Endothelial cell of umbilical vein (primary cell): ENCODE measurements at regions of chr20 and their contacts with region 1.

Region 1: DNA sequence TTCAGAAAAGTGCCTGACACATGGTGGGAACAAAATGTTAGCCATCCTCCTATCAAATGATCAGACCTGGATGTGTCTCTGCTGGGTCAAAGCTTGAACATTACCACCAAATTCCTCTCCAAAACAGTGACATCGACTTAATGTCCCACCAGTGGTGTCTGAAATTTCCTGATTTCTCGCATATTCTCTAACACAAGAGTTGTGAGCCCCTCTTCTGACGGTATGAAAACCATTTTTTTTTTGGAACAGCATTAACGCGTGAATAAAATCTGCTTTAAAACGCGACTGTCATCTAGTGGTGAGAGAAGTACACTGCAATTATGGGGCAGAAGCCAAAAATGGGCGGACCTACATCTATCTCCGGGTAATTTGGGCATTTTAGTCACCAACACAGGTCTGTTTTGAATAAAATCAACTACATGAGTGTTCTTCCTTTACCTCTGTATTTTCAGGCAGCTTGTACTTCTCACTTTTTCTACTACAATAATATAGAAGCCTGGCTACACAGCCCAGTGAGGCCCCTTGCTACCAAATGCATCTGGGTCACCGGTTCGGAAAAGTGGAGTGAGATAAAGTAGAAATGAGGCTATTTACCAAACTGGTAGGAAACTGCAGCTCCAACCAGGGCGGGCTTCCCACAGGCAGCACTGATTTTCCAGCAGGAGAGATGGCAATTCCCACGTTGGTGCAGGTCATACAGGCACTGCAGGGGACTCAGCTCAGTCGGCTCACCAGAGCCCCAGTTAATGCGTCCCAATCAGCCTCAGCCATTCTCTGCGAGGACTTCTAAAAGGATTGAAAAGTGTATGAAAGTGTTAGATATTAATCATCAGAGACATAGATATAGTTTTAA is 27.4 kb downstream of the MGME1 start:
- DNase-seq: peak; percentile 70
- H3K4me3 ChIP-seq: no peak overlapping the region
- H3K27ac ChIP-seq: no peak overlapping the region
- H3K4me1 ChIP-seq: peaks cover 16% of the 10 kb centered on the region
- H3K27me3 ChIP-seq: peaks cover 0 to 4% of the 10 kb centered on the region in 2 experiments
- CTCF ChIP-seq: peak; percentile 85 to 86
- POLR2A ChIP-seq: no peak

Region 2: GRCh38 chr20:17504898-17505635 is 491.1 kb before region 1 on chr20:
- CTCF ChIA-PET with region 1: interaction called, 20 read pairs
- POLR2A ChIA-PET with region 1: no interaction called
- dilution Hi-C with region 1: no loop called
- intact Hi-C with region 1: loop called (anchors 1 kb)
- DNase-seq: peak; percentile 72
- H3K4me3 ChIP-seq: peak overlapping the region; percentile 31 to 74 (median 58)
- H3K27ac ChIP-seq: peak overlapping the region; percentile 9
- H3K4me1 ChIP-seq: peaks cover 13% of the 10 kb centered on the region
- H3K27me3 ChIP-seq: no peaks in the 10 kb centered on the region
- CTCF ChIP-seq: peak; percentile 39 to 41
- POLR2A ChIP-seq: peak; percentile 61

Region 3: GRCh38 chr20:17654649-17655285 is 341.4 kb before region 1 on chr20:
- CTCF ChIA-PET with region 1: interaction called, 4 read pairs
- POLR2A ChIA-PET with region 1: no interaction called
- dilution Hi-C with region 1: no loop called
- intact Hi-C with region 1: loop called (anchors 1 kb)
- DNase-seq: peak; percentile 66
- H3K4me3 ChIP-seq: no peak overlapping the region
- H3K27ac ChIP-seq: peak overlapping the region; percentile 29
- H3K4me1 ChIP-seq: peaks cover 5% of the 10 kb centered on the region
- H3K27me3 ChIP-seq: no peaks in the 10 kb centered on the region
- CTCF ChIP-seq: peak; percentile 75 to 78
- POLR2A ChIP-seq: no peak

Region 4: DNA sequence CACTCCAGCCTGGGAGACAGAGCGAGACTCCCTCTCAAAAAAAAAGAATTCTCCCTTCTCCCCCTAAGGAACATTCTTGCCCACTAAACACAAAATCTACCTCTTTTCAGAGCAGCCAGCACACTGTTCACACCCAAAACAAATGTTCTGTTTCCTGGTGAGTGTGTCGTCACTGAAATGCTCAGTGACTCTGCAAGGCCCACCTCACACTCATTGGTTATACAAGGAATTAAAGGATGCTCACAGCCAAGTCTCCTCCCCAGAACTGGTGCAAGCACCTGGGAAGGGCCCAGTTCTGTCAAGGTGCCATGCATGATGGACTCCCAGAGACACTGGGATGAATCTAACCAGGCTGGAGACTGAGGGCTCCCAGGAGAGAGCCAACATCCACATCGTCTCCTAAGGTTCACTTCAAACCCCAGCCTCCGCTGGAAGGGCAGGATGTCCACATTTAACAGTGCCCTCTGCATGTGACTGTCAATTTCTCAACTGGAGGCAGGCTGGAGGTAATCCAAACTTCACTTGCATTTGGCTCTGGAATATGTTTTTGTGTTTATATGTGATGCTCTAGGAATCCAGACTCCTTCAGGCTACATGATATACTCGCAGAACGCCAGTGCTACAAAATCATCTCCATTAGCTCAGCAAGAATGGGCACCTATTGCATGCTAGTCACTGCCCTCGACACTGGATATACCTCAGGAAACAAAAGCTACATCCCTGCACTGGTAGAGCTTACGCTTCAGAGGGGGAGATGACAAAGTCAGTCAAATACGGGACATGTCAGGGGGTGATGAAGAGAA is 321.3 kb before region 1 on chr20:
- CTCF ChIA-PET with region 1: no interaction called
- POLR2A ChIA-PET with region 1: no interaction called
- dilution Hi-C with region 1: no loop called
- intact Hi-C with region 1: no loop called
- DNase-seq: no peak
- H3K4me3 ChIP-seq: no peak overlapping the region
- H3K27ac ChIP-seq: no peak overlapping the region
- H3K4me1 ChIP-seq: peaks cover 3% of the 10 kb centered on the region
- H3K27me3 ChIP-seq: no peaks in the 10 kb centered on the region
- CTCF ChIP-seq: no peak
- POLR2A ChIP-seq: no peak

Region 5: DNA sequence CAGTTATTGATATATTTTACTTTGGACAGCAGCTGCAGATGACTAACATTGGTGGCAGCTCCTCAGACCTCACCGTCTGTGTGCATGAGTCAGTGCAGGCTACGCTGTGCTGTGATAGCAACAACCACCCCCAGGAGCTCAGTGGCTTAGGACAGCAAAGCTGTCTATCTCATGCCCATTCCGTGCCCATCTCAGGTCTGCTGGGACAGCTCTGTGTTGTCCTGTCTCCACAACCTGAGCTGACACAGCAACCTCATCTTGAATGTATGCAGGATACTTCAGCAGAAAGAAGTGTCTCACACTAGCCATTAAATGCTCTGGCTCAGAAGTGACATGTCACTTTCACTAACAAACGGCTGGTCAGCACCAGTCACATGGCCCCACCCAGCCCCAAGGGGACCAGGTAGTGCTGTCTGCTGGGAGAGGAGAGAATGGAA is 248.7 kb before region 1 on chr20:
- CTCF ChIA-PET with region 1: no interaction called
- POLR2A ChIA-PET with region 1: no interaction called
- dilution Hi-C with region 1: no loop called
- intact Hi-C with region 1: loop called (anchors 10 kb)
- DNase-seq: peak; percentile 85
- H3K4me3 ChIP-seq: no peak overlapping the region
- H3K27ac ChIP-seq: peak overlapping the region; percentile 43
- H3K4me1 ChIP-seq: peaks cover 24% of the 10 kb centered on the region
- H3K27me3 ChIP-seq: no peaks in the 10 kb centered on the region
- CTCF ChIP-seq: no peak
- POLR2A ChIP-seq: no peak

Region 6: GRCh38 chr20:17825960-17826843 is 170.0 kb before region 1 on chr20:
- CTCF ChIA-PET with region 1: no interaction called
- POLR2A ChIA-PET with region 1: no interaction called
- dilution Hi-C with region 1: no loop called
- intact Hi-C with region 1: no loop called
- DNase-seq: no peak
- H3K4me3 ChIP-seq: no peak overlapping the region
- H3K27ac ChIP-seq: no peak overlapping the region
- H3K4me1 ChIP-seq: peaks cover 8% of the 10 kb centered on the region
- H3K27me3 ChIP-seq: no peaks in the 10 kb centered on the region
- CTCF ChIP-seq: no peak
- POLR2A ChIP-seq: no peak

Region 7: DNA sequence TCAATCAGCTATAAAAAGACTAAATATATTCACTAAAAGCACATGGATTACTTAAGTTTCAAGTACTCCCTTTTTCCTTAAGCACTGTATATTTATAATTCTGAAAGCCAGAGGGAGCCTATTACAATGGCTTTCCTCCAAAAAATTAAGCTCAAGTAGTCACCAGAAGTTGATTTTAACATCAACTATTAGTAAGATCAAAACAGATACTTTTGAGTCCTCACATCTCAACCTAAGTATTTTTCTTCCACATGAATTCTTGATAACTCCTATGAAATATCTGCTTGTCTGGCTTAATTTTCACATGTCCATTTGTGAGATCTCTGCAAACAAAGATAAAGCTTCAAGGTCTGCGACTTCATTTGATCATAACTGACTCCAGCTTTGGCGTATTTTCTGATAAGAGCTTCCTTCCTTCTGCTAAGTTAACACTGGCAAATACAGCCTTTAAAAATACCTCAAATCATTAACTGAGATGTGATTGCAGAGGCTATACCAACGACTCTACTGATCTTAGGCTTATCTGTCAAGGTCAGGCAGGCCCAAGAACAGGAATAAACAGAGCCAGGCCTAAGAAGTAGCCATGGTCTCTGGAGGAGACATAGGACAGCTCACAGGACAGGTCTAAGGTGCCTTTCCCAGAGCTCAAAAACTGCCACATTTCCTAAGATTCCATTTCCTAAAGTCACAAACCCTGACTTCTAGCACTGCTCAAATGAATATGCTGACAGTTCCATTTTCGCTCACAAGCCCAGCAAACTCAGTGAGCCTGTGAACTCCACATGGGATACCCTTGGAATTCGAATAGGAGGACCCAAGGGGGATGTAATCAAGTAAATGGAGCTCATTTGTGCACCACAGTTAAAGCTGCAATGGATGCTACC is 37.6 kb before region 1 on chr20:
- CTCF ChIA-PET with region 1: interaction called, 93 read pairs
- POLR2A ChIA-PET with region 1: no interaction called
- dilution Hi-C with region 1: no loop called
- intact Hi-C with region 1: loop called (anchors 1 kb)
- DNase-seq: peak; percentile 75
- H3K4me3 ChIP-seq: no peak overlapping the region
- H3K27ac ChIP-seq: no peak overlapping the region
- H3K4me1 ChIP-seq: peaks cover 49% of the 10 kb centered on the region
- H3K27me3 ChIP-seq: no peaks in the 10 kb centered on the region
- CTCF ChIP-seq: no peak
- POLR2A ChIP-seq: peak; percentile 19

Region 8: GRCh38 chr20:17968366-17969279 is 27.6 kb before region 1 on chr20 and contains the starts of genes MGME1 and SNX5:
- CTCF ChIA-PET with region 1: interaction called, 104 read pairs
- POLR2A ChIA-PET with region 1: interaction called, 5 read pairs
- dilution Hi-C with region 1: no loop called
- intact Hi-C with region 1: loop called (anchors 1 kb)
- DNase-seq: peak; percentile 100
- H3K4me3 ChIP-seq: peak within 1 kb of the TSS; percentile 76 to 97 (median 97)
- H3K27ac ChIP-seq: peak within 1 kb of the TSS; percentile 92
- H3K4me1 ChIP-seq: peaks cover 62% of the 10 kb centered on the region
- H3K27me3 ChIP-seq: no peaks in the 10 kb centered on the region
- CTCF ChIP-seq: no peak
- POLR2A ChIP-seq: peak; percentile 92
- total RNA-seq, gene MGME1: 18.0 and 26.2 TPM in 2 replicates
- total RNA-seq, gene SNX5: 109 and 121 TPM in 2 replicates

Region 9: GRCh38 chr20:18276821-18277220 is 280.6 kb after region 1 on chr20:
- CTCF ChIA-PET with region 1: no interaction called
- POLR2A ChIA-PET with region 1: interaction called, 3 read pairs
- dilution Hi-C with region 1: no loop called
- intact Hi-C with region 1: loop called (anchors 1 kb)
- DNase-seq: peak; percentile 59
- H3K4me3 ChIP-seq: no peak overlapping the region
- H3K27ac ChIP-seq: no peak overlapping the region
- H3K4me1 ChIP-seq: no peaks in the 10 kb centered on the region
- H3K27me3 ChIP-seq: peaks cover 13 to 17% of the 10 kb centered on the region in 2 experiments
- CTCF ChIP-seq: peak; percentile 86 to 89
- POLR2A ChIP-seq: no peak